Tibial artery (tissue), 4 donors: ENCODE measurements at regions of chr3 and their contacts with region 1.

Region 1: DNA sequence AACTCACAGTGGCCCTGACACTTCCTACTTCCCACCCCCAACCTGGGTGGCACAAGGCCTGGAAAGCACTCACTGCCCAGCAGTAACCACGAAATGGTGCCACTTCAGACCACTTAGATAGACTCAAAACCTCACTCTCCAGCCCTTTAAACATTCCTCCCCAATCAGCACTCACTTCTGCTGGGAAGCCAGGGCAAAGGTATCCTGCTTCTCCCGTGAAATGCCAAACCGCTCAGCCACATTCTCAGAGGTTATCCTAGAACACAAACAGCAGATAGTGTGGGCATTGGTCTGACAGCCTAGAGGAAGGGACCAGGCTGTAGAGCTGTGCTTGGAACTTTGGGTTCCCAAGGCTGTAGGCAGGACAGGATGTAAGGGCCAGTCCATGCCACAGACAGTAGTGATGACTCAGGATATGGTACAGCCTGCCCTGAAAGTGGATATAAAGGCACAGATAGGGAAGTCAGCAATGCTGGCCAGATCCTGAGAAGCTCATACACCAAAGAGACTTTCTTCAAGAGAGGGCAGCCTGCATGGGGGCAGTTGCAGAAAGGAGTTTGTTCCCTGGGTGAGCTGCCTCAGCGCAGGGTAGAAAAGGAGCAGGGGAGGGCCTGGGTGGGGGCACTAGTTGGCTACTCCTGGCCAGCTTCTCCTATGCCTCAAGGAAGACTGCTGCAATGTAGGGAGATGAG is 9.2 kb downstream of the ACAA1 start:
- DNase-seq: peak in 1 of 2 donors; percentile 16
- H3K4me3 ChIP-seq: no peak overlapping the region
- H3K27ac ChIP-seq: no peak overlapping the region
- H3K4me1 ChIP-seq: peaks cover 0 to 5% (median 2%) of the 10 kb centered on the region in 4 donors
- H3K27me3 ChIP-seq: no peaks in the 10 kb centered on the region
- CTCF ChIP-seq: no peak

Region 2: DNA sequence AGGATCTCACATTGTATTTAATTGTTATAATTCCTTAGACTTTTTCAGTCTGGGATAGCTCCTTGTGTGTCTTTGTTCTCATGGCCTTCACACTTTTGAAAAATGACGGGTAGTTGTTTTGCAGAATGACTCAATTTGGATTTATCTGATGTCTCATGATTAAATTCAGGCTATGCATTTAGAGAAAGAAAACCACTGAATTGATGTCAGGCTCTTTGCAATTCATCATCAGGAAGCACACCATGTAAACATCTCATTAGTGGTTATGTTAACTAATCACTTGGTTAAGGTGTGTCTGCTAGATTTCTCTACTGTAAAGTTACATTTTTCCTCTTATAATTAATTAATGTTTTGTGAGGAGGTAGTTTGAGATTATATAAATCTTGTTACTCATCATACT is 129.8 kb after region 1 on chr3:
- intact Hi-C with region 1: loop called (anchors 10 kb)
- DNase-seq: no peak
- H3K4me3 ChIP-seq: no peak overlapping the region
- H3K27ac ChIP-seq: no peak overlapping the region
- H3K4me1 ChIP-seq: no peaks in the 10 kb centered on the region
- H3K27me3 ChIP-seq: no peaks in the 10 kb centered on the region
- CTCF ChIP-seq: no peak

Region 3: DNA sequence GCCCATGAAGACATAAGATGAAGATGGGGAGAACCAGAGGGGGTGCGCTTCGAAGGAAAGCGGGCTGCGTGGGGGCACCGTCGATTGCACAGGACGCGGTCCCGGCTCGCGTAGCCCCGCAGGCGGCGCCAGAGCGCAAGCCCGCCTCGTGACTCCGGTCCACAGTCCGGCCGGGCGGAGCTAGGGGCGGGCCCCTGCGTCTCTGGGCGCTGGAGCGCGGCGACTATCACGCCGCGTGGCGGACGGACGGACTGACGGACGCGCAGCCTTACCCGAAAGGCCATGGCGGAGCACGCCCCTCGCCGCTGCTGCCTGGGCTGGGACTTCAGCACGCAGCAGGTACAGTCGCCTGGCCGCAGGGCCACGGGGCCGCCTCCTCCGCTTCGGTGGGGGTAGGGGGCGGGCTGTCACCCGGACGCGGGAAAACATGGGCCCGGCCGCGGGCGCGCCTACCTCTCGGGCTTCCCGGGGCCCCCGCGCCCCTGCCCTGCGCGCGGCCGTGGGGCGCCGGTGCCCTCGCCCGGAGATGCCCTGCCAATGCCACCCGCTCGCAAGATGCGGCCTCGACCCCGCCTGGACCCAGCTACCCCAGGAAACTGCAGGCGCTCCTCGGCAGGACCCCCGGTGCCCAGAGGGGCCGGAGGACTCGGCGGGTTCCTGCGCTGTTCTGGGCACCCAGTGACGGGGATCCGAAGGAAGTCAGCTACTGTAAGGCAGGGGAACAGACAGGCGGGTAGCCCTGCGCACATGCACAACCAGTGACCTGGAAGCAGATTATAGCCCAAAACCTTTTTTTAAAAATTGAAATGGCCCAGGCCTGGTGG is 219.0 kb after region 1 on chr3 and contains the start of gene XYLB:
- intact Hi-C with region 1: loop called (anchors 10 kb)
- DNase-seq: peak; percentile 82 to 90
- H3K4me3 ChIP-seq: peak within 1 kb of the TSS; percentile 62 to 63
- H3K27ac ChIP-seq: peak within 1 kb of the TSS; percentile 43 to 53
- H3K4me1 ChIP-seq: peaks cover 0 to 13% (median 7%) of the 10 kb centered on the region in 4 donors
- H3K27me3 ChIP-seq: no peaks in the 10 kb centered on the region
- CTCF ChIP-seq: peak; percentile 87 to 92

Region 4: DNA sequence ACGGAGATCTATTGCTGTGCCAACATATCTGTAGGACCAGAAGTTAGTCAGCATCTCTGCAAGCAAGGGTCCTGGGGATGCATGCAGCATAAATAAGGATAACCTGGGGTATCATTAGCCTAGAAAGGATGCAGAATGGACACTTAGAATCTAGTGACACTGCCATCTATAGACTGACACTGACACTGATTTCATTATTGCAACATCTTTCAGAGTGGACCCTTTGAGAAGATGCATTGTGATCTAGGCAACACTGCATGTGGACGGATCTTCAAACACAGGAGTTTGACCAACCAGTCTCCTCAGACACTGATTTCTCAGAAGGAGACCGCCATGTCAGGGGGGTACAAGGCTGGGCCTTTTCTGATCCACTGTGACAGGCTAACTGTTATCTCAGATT is 635.8 kb after region 1 on chr3:
- intact Hi-C with region 1: no loop called
- DNase-seq: no peak
- H3K4me3 ChIP-seq: no peak overlapping the region
- H3K27ac ChIP-seq: no peak overlapping the region
- H3K4me1 ChIP-seq: no peaks in the 10 kb centered on the region
- H3K27me3 ChIP-seq: no peaks in the 10 kb centered on the region
- CTCF ChIP-seq: no peak